Stomach (tissue), 19 donors: ENCODE measurements at regions of chr7 and their contacts with region 1.

Region 1: DNA sequence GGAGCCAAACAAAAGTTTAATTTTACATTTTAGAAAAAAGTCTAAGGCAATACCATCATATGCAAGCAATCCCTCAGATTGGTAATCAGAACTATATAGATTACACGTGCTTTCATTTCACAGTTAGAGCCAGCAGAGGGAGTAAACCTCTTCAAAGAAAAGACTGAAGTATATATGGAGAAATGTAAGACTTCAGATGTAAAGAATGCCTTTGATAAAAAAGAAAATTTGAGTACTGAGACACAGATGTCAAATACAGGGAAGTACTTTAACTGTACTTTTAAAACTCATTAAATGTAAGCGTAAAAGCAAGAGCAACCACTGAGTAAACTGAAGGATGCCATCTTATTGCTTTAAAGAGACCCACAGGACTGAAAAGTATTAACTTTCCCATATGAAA is 101.4 kb upstream of the FAM133B start:
- DNase-seq: peak in 1 of 2 donors; percentile 78
- H3K4me3 ChIP-seq: no peak overlapping the region
- H3K27ac ChIP-seq: peak overlapping the region in 3 of 5 donors; percentile 8 to 90 (median 38)
- H3K4me1 ChIP-seq: peaks cover 6 to 50% (median 26%) of the 10 kb centered on the region in 4 donors
- H3K27me3 ChIP-seq: no peaks in the 10 kb centered on the region
- CTCF ChIP-seq: peak in 5 of 7 experiments; percentile 9 to 58 (median 30)
- EP300 ChIP-seq: no peak
- POLR2A ChIP-seq: no peak

Region 2: DNA sequence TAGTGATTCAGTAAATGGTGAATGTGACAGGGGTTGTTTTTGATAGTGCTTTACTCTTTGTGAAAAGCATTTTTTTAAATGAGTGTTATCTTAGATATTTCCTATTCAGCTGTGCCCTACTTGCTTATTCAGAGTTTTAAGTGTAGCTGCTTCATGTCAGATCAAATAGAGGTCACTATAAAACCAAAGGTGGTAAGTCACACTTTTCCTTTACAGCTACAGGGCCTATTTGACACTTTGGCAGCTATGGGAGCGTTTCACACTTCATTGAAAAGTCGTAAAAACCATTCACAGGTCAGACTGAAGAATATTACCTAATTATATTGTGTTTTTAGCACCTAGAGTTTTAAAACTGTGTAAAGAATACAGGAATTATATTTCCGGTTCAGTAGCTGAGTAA is 378.5 kb before region 1 on chr7:
- intact Hi-C with region 1: no loop called
- DNase-seq: no peak
- H3K4me3 ChIP-seq: no peak overlapping the region
- H3K27ac ChIP-seq: no peak overlapping the region
- H3K4me1 ChIP-seq: no peaks in the 10 kb centered on the region
- H3K27me3 ChIP-seq: no peaks in the 10 kb centered on the region
- CTCF ChIP-seq: no peak
- EP300 ChIP-seq: no peak
- POLR2A ChIP-seq: no peak

Region 3: GRCh38 chr7:92534572-92534971 is 157.0 kb before region 1 on chr7:
- intact Hi-C with region 1: no loop called
- DNase-seq: no peak
- H3K4me3 ChIP-seq: no peak overlapping the region
- H3K27ac ChIP-seq: no peak overlapping the region
- H3K4me1 ChIP-seq: peaks cover 0 to 34% (median 16%) of the 10 kb centered on the region in 4 donors
- H3K27me3 ChIP-seq: no peaks in the 10 kb centered on the region
- CTCF ChIP-seq: no peak
- EP300 ChIP-seq: no peak
- POLR2A ChIP-seq: no peak

Region 4: DNA sequence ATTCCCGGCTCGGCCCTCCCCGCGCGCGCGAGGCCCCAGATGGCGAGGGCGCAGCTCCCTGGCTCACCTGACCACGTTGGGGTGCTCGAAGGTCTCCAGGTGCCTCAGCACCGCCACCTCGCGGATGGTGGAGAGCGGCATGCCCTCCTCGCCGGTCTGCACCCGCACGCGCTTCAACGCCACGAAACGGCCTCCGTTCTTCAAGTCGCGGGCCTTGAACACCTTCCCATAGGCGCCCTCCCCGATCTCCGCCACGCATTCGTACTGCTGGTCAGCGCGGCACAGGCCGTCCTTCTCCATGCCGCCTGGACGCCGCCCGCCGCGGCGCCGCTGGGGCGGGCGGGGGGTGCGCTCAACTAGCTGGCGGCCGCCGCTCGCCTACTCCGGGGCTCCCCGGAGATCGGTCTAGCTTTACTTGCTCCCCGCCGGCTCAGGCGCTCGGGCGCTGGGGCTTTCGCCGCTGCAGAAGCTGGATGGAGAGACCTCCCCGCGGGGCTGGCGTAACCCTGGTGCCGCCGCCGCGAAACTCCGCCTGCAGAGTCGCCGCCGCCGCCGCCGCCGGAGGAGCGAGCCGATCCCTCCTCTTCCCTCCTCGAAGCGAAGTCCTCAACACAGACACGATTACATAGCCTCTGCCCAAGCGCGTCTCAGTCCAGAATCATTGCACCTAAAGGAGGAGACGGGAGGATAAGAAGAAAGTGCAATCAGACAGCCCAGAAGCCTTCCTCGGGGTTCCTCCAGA is 141.6 kb after region 1 on chr7:
- intact Hi-C with region 1: loop called (anchors 10 kb)
- DNase-seq: peak; percentile 92 to 97
- H3K4me3 ChIP-seq: peak overlapping the region; percentile 64 to 95 (median 80)
- H3K27ac ChIP-seq: peak overlapping the region; percentile 86 to 93 (median 92)
- H3K4me1 ChIP-seq: peaks cover 14 to 57% (median 44%) of the 10 kb centered on the region in 4 donors
- H3K27me3 ChIP-seq: no peaks in the 10 kb centered on the region
- CTCF ChIP-seq: peak in 5 of 7 experiments; percentile 78 to 85 (median 80)
- EP300 ChIP-seq: no peak
- POLR2A ChIP-seq: no peak